Heart left ventricle (tissue), 16 donors: ENCODE measurements at regions of chr4 and their contacts with region 1.

Region 1: GRCh38 chr4:123340381-123340701 is 56.3 kb upstream of the SPRY1 start:
- DNase-seq: peak in 2 of 5 donors; percentile 35 to 47
- ATAC-seq: peak; percentile 65 to 88 (median 87)
- H3K4me3 ChIP-seq: no peak overlapping the region
- H3K27ac ChIP-seq: peak overlapping the region; percentile 57 to 83 (median 77)
- H3K4me1 ChIP-seq: peaks cover 0 to 43% (median 13%) of the 10 kb centered on the region in 12 donors
- H3K27me3 ChIP-seq: no peaks in the 10 kb centered on the region
- CTCF ChIP-seq: no peak
- POLR2A ChIP-seq: peak in 1 of 2 donors; percentile 38

Region 2: GRCh38 chr4:123244137-123244536 is 96.2 kb before region 1 on chr4:
- intact Hi-C with region 1: loop called in 2 of 10 experiments (anchors 5 to 10 kb)
- DNase-seq: peak; percentile 63 to 78 (median 73)
- ATAC-seq: peak; percentile 96 to 99 (median 97)
- H3K4me3 ChIP-seq: peak overlapping the region in 1 of 12 donors; percentile 22
- H3K27ac ChIP-seq: peak overlapping the region in 5 of 12 donors; percentile 12 to 72 (median 55)
- H3K4me1 ChIP-seq: peaks cover 0 to 45% (median 26%) of the 10 kb centered on the region in 12 donors
- H3K27me3 ChIP-seq: no peaks in the 10 kb centered on the region
- CTCF ChIP-seq: peak in 10 of 12 donors; percentile 11 to 64 (median 42)
- POLR2A ChIP-seq: peak in 1 of 2 donors; percentile 17

Region 3: GRCh38 chr4:123250843-123251242 is 89.5 kb before region 1 on chr4:
- intact Hi-C with region 1: loop called in 4 of 10 experiments (anchors 5 to 10 kb)
- DNase-seq: peak; percentile 45 to 70 (median 63)
- ATAC-seq: peak; percentile 52 to 83 (median 82)
- H3K4me3 ChIP-seq: no peak overlapping the region
- H3K27ac ChIP-seq: peak overlapping the region in 9 of 12 donors; percentile 21 to 70 (median 44)
- H3K4me1 ChIP-seq: peaks cover 0 to 47% (median 29%) of the 10 kb centered on the region in 12 donors
- H3K27me3 ChIP-seq: no peaks in the 10 kb centered on the region
- CTCF ChIP-seq: no peak
- POLR2A ChIP-seq: no peak

Region 4: DNA sequence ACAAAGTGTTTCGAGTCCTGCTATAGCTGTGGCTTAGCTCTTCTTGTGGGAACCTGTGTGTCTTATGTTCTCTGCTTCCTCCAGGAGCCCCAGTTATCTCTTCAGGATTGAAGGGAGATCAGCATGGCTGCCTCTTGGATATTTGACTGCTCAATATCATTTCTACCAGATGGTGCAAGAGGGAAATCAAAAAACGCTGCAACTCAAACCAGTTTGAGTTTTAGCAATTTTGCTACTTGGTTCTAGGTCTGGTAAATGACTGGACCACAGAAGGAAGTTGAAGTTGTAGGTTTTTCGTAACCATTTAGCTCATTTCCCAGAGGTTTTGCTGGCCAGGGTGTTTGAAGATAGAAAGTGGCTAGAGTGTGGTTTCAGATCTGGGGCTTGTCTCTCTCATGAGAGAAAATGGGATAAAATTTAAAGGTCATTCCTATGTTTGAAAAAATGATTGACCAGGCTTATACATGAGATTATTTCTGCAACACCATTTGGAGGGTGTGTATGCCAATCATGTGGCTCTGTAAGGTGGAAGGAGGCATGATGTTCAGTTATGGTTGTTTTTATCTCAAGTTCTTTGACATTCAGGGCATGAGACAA is 266.7 kb after region 1 on chr4:
- intact Hi-C with region 1: no loop called
- DNase-seq: no peak
- ATAC-seq: peak in 2 of 4 donors; percentile 22 to 37
- H3K4me3 ChIP-seq: no peak overlapping the region
- H3K27ac ChIP-seq: peak overlapping the region in 1 of 12 donors; percentile 42
- H3K4me1 ChIP-seq: peaks cover 0 to 25% (median 0%) of the 10 kb centered on the region in 12 donors
- H3K27me3 ChIP-seq: no peaks in the 10 kb centered on the region
- CTCF ChIP-seq: no peak
- POLR2A ChIP-seq: no peak